OCI-LY7 (cell line): ENCODE measurements at regions of chr1 and their contacts with region 1.

Region 1: DNA sequence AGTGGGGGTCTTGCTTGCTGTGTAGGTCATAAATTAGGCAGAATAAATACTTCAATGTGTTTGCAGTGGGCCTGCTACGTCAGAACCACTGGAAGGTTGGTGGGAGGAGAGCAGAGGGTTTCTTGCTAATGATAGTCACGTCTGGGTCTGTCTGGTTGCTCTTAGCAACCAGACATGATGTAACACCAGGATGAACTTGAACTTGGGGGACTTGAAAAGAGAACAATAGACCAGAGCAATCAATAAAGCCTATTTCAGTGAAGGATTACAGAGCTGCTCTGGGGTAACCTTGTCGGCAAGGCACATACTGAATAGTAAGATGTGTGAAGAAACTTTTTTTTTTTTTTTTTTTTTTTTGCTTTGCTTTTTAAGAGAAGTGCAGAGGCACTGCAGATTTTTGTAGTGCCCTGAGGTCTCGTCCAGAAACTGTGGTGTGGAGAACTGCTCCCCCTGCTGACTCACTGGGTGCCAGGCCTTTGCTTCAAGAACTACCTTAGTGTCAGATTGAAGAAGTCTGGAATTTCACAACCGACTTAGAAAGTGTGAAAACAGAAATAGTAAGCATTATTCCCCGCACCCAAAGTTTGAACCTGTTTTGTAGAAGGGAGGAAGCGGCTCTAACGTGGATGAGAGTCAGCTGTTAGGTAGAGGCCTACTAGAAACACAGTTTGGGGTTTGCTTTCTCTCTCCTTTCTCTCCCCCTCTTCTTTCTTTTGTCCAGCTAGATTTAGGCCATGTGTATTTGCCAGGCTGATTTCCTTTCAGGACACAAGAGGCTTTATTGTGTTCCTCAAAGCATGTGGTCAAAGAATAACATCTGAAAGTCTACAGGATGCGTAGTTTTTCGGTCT is 271.6 kb downstream of the TM2D1 start:
- DNase-seq: peak; percentile 69
- H3K4me3 ChIP-seq: no peak overlapping the region
- H3K27ac ChIP-seq: no peak overlapping the region
- H3K4me1 ChIP-seq: peaks cover 6% of the 10 kb centered on the region
- CTCF ChIP-seq: peak; percentile 87

Region 2: DNA sequence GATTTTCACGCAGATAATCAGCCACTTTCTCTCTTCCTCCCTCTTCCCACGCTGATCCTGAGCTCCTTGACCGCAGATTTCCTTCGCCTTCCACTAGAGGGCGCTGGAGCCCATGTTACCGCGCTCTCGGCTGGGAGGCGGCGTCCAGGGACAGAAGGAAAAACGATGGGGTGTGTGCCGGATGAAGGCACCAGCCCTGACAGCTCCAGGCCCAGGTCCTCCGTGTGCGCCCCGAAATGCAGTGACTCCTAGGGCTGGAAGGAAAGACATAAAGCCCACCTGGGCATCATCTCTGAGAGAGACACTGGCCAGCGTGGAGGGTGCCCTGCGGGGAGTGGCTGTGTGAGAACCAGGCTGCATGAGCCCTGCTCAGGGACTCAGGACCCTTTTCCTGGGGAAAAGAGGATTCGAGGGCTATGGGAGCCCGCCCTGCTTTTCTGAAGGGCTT is 1481.8 kb before region 1 on chr1:
- CTCF ChIA-PET with region 1: no interaction called
- POLR2A ChIA-PET with region 1: no interaction called
- intact Hi-C with region 1: loop called (anchors 5 kb)
- DNase-seq: peak; percentile 20
- H3K4me3 ChIP-seq: no peak overlapping the region
- H3K27ac ChIP-seq: no peak overlapping the region
- H3K4me1 ChIP-seq: no peaks in the 10 kb centered on the region
- CTCF ChIP-seq: peak; percentile 87

Region 3: GRCh38 chr1:60848583-60849188 is 604.6 kb before region 1 on chr1:
- CTCF ChIA-PET with region 1: no interaction called
- POLR2A ChIA-PET with region 1: no interaction called
- intact Hi-C with region 1: loop called (anchors 5 kb)
- DNase-seq: peak; percentile 22
- H3K4me3 ChIP-seq: no peak overlapping the region
- H3K27ac ChIP-seq: no peak overlapping the region
- H3K4me1 ChIP-seq: no peaks in the 10 kb centered on the region
- CTCF ChIP-seq: peak; percentile 80

Region 4: DNA sequence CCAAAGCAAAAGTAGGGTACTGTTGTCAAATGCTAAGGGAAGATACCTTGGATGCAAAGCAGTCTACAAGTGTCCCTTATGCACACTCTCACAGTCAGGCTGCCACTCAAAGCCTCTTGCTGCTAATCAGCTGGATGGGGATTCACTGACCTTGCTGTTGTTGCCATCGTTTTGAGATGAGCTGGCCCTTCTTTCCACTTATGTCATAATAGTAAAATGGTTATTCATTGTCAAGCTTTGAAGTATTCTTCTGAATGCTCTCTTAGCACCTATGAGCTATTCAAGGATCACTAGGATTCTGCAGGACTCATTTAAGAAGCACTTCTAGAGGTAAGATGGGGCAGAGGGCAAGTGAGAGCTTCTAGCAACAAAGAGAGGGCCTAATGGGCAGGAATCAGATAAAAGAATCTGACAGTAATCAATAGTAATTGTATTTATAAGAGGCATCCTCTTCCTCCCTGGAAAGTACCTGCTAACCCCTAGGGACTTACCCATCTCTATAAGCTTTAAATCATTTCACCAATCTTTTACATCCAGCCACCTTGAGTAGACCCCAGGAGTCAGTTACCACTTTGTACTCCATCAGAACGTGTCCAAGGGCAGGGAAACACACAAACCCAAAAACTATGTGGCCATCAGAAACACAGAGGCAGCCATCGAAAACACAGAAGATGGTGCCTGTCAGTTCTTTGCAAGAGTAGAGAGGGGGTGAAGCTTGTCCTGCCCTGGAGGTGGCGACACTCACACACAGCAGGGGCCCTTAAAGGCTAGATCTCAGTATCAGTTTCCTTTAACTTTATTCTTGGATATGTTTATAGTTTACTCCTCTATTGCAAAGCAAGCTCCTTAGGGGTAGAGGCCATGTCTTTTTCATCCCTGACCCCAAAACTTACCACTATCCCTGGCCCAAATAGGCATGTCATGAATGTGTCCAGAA is 474.6 kb before region 1 on chr1:
- CTCF ChIA-PET with region 1: no interaction called
- POLR2A ChIA-PET with region 1: interaction called, 3 read pairs
- intact Hi-C with region 1: loop called (anchors 1 kb)
- DNase-seq: peak; percentile 49
- H3K4me3 ChIP-seq: no peak overlapping the region
- H3K27ac ChIP-seq: no peak overlapping the region
- H3K4me1 ChIP-seq: no peaks in the 10 kb centered on the region
- CTCF ChIP-seq: peak; percentile 85

Region 5: GRCh38 chr1:61049850-61050540 is 403.3 kb before region 1 on chr1:
- CTCF ChIA-PET with region 1: interaction called, 3 read pairs
- POLR2A ChIA-PET with region 1: no interaction called
- intact Hi-C with region 1: loop called (anchors 1 kb)
- DNase-seq: peak; percentile 81
- H3K4me3 ChIP-seq: peak overlapping the region; percentile 71
- H3K27ac ChIP-seq: no peak overlapping the region
- H3K4me1 ChIP-seq: peaks cover 10% of the 10 kb centered on the region
- CTCF ChIP-seq: peak; percentile 94

Region 6: GRCh38 chr1:61352845-61353435 is 100.4 kb before region 1 on chr1:
- CTCF ChIA-PET with region 1: no interaction called
- POLR2A ChIA-PET with region 1: no interaction called
- intact Hi-C with region 1: no loop called
- DNase-seq: no peak
- H3K4me3 ChIP-seq: no peak overlapping the region
- H3K27ac ChIP-seq: no peak overlapping the region
- H3K4me1 ChIP-seq: no peaks in the 10 kb centered on the region
- CTCF ChIP-seq: no peak

Region 7: GRCh38 chr1:61388566-61388965 is 64.8 kb before region 1 on chr1:
- CTCF ChIA-PET with region 1: no interaction called
- POLR2A ChIA-PET with region 1: no interaction called
- intact Hi-C with region 1: no loop called
- DNase-seq: no peak
- H3K4me3 ChIP-seq: no peak overlapping the region
- H3K27ac ChIP-seq: no peak overlapping the region
- H3K4me1 ChIP-seq: no peaks in the 10 kb centered on the region
- CTCF ChIP-seq: no peak

Region 8: DNA sequence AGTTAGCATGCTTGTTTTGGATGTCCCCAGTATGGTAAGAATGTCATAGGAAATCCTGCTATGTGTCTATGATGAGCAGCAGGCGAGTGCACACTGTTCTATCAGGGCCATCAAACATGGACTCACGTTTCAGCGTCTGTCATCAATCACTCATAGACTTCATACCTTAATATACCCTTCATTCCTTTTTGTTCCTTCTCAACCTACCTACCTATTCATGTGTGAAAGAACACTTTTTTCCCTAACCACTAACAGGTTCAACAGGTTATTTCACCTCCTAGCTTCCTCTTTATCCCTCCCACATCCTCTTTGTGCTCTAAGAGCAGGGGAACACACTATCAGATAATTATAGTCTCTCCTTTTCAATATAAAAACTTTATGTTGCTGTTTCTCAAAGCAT is 29.0 kb before region 1 on chr1:
- CTCF ChIA-PET with region 1: no interaction called
- POLR2A ChIA-PET with region 1: no interaction called
- intact Hi-C with region 1: no loop called
- DNase-seq: no peak
- H3K4me3 ChIP-seq: no peak overlapping the region
- H3K27ac ChIP-seq: no peak overlapping the region
- H3K4me1 ChIP-seq: no peaks in the 10 kb centered on the region
- CTCF ChIP-seq: no peak

Region 9: DNA sequence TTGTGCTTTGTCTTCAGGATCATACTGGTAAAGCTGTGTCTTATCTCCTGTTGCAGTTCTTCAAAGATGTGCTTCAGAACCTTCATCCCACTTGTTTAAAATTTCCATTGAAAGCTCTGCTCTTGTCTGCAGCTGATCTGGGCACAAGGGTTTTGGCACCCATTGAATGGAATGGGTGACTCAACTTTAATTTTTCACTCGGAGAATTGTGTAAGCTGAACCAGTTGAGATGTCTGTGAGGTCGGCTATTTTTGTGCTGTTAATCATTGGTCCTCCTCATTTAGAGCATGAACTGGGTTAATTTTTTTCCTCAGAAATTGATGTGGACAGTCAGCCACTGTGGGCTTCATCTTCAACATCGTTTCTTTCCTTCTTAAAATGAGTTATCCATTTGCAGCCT is 19.5 kb after region 1 on chr1:
- CTCF ChIA-PET with region 1: no interaction called
- POLR2A ChIA-PET with region 1: no interaction called
- intact Hi-C with region 1: no loop called
- DNase-seq: no peak
- H3K4me3 ChIP-seq: no peak overlapping the region
- H3K27ac ChIP-seq: no peak overlapping the region
- H3K4me1 ChIP-seq: no peaks in the 10 kb centered on the region
- CTCF ChIP-seq: no peak